Prostate gland (tissue), 2 donors: ENCODE measurements at regions of chr7 and their contacts with region 1.

Region 1: GRCh38 chr7:128904381-128905197 is 5.9 kb downstream of the KCP start:
- DNase-seq: no peak
- H3K4me3 ChIP-seq: no peak overlapping the region
- H3K27ac ChIP-seq: no peak overlapping the region
- H3K4me1 ChIP-seq: no peaks in the 10 kb centered on the region
- H3K27me3 ChIP-seq: no peaks in the 10 kb centered on the region
- CTCF ChIP-seq: peak; percentile 43 to 79 (median 67)
- POLR2A ChIP-seq: no peak

Region 2: GRCh38 chr7:129091484-129092002 is 187.0 kb after region 1 on chr7:
- intact Hi-C with region 1: loop called (anchors 2 kb)
- DNase-seq: peak; percentile 72
- H3K4me3 ChIP-seq: no peak overlapping the region
- H3K27ac ChIP-seq: no peak overlapping the region
- H3K4me1 ChIP-seq: no peaks in the 10 kb centered on the region
- H3K27me3 ChIP-seq: no peaks in the 10 kb centered on the region
- CTCF ChIP-seq: peak; percentile 87 to 95 (median 92)
- POLR2A ChIP-seq: no peak